WTC11 (cell line): ENCODE measurements at regions of chr17 and their contacts with region 1.

Region 1: DNA sequence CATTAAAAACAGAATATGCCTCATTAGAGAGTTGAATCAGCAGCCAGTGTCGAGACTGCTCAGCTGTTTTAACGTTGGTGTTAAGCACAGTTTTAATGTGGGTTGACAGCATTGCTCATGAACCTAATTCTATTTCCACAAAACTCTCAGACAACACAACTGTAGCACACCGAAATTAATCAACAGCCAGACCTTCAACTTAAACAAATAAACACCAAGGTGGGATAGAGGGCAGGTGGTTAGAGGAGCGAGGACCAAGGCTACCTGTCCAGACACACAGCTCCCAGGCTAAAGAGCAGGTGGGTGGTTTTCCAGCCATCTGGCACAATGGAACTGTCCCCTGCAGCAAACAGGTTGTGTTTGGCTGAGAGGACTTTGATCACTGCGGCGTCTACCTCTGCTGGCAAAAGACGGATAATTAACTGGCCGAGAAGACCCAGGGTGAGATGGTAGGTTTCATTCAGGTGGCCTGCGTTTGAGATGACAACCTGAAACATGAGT is 69.6 kb upstream of the ATP2A3 start:
- DNase-seq: no peak
- ATAC-seq: no peak
- H3K4me3 Mint-ChIP-seq: no peak overlapping the region
- H3K27ac Mint-ChIP-seq: no peak overlapping the region
- H3K4me1 Mint-ChIP-seq: no peaks in the 10 kb centered on the region
- H3K27me3 Mint-ChIP-seq: no peaks in the 10 kb centered on the region
- CTCF ChIP-seq: no peak

Region 2: GRCh38 chr17:4017377-4017776 is 16.4 kb before region 1 on chr17:
- CTCF ChIA-PET with region 1: interaction called, 10 read pairs
- POLR2A ChIA-PET with region 1: no interaction called
- DNase-seq: peak; percentile 52
- ATAC-seq: peak; percentile 72
- H3K4me3 Mint-ChIP-seq: no peak overlapping the region
- H3K27ac Mint-ChIP-seq: no peak overlapping the region
- H3K4me1 Mint-ChIP-seq: no peaks in the 10 kb centered on the region
- H3K27me3 Mint-ChIP-seq: no peaks in the 10 kb centered on the region
- CTCF ChIP-seq: no peak

Region 3: DNA sequence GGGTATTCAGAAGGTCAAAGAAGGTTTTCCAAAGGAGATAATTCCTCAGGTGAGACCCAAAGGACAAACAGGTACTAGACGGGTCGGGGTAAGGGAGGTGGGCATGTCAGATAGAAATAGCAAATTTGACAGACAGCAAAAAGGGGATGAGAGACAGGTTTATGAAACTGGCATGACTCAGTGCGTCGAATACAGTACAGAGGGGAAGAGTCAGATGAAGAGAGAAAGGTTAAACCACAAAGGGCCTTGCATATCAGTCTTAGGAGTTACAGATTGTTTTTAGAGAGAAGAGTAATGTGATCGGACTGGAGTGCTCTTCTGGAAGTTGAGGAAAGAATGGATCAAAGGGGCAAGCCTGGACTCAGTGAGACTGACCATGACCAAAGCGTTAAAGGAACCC is 20.6 kb after region 1 on chr17:
- CTCF ChIA-PET with region 1: no interaction called
- POLR2A ChIA-PET with region 1: no interaction called
- DNase-seq: no peak
- ATAC-seq: no peak
- H3K4me3 Mint-ChIP-seq: no peak overlapping the region
- H3K27ac Mint-ChIP-seq: no peak overlapping the region; the same call in 1 of the 2 replicates
- H3K4me1 Mint-ChIP-seq: no peaks in the 10 kb centered on the region
- H3K27me3 Mint-ChIP-seq: no peaks in the 10 kb centered on the region
- CTCF ChIP-seq: no peak

Region 4: DNA sequence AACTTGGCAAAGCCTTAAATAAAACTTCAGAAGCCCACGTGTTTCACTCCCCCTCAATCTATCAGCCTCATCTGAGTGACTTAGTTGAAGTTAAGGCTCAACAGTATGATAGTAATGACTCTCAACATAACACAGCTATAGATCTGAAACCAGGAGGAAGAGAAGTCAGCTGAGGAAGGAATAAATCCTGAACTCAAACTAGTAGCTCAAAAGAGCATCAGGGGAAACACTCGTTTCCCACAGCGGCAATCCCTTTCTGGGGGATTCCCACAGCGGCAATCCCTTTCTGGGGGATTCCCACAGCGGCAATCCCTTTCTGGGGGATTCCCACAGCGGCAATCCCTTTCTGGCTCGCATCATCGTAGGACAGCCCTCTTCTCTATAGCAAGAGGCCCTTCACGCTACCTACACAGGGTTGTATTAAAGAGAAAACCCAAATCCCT is 52.3 kb after region 1 on chr17:
- CTCF ChIA-PET with region 1: no interaction called
- POLR2A ChIA-PET with region 1: no interaction called
- DNase-seq: no peak
- ATAC-seq: no peak
- H3K4me3 Mint-ChIP-seq: no peak overlapping the region
- H3K27ac Mint-ChIP-seq: no peak overlapping the region
- H3K4me1 Mint-ChIP-seq: no peaks in the 10 kb centered on the region
- H3K27me3 Mint-ChIP-seq: no peaks in the 10 kb centered on the region
- CTCF ChIP-seq: no peak